CD14-positive monocyte (primary cell): ENCODE measurements at regions of chr1 and their contacts with region 1.

Region 1: DNA sequence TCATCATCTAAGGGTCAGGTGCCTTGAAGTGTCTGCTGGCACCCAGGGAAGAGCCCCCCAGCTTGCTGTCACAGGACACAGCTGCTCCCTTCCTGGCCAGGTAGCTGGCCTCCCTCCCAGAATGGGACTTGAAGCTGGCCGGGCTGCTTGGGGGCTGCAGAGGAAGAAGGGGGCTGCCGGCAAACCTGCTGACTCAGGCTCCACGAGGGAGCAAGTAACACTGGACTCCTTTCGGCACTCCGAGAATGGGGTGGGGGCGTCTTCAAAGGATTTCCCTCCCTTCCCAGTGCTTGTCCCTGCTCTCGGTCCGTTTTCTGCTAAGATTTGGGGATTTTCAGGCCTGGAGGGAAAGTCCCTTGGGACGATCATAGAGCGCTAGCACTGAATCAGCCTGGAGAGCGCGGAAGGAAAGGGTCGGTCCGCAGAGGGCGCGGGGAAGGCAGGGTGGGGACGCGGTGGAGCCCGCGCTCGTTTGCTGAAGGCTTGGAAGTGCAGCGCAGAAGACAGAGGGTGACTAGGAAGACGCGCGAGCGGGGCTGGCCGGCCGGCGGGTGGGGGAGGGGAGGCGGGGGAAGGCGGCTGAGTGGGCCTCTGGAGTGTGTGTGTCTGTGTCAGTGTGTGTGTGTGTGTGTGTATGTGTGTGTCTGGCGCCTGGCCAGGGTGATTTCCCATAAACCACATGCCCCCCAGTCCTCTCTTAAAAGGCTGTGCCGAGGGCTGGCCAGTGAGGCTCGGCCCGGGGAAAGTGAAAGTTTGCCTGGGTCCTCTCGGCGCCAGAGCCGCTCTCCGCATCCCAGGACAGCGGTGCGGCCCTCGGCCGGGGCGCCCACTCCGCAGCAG is at the start of gene CSF1:
- DNase-seq: peak; percentile 47 to 83 (median 70)
- H3K4me3 ChIP-seq: peak within 1 kb of the TSS; percentile 48 to 75 (median 56)
- H3K4me3 Mint-ChIP-seq: peak within 1 kb of the TSS; percentile 89 to 92
- H3K27ac ChIP-seq: peak within 1 kb of the TSS in 1 of 2 donors; percentile 38
- H3K27ac Mint-ChIP-seq: peak within 1 kb of the TSS; percentile 36 to 87 (median 79)
- H3K4me1 ChIP-seq: peaks cover 17 to 24% of the 10 kb centered on the region in 2 donors
- H3K4me1 Mint-ChIP-seq: peaks cover 33% of the 10 kb centered on the region
- H3K27me3 ChIP-seq: peaks cover 29 to 64% of the 10 kb centered on the region in 2 donors
- H3K27me3 Mint-ChIP-seq: peaks cover 55 to 70% (median 60%) of the 10 kb centered on the region in 3 donors
- CTCF ChIP-seq: no peak
- polyA plus RNA-seq, gene CSF1: 0.11 to 0.69 (median 0.38) TPM

Region 2: GRCh38 chr1:109864047-109864822 is 46.1 kb before region 1 on chr1:
- intact Hi-C with region 1: loop called in 1 of 2 experiments (anchors 10 kb)
- DNase-seq: peak; percentile 29 to 42 (median 38)
- H3K4me3 ChIP-seq: peak overlapping the region in 1 of 3 experiments; percentile 38
- H3K4me3 Mint-ChIP-seq: peak overlapping the region; percentile 18 to 68
- H3K27ac ChIP-seq: peak overlapping the region in 1 of 2 donors; percentile 18
- H3K27ac Mint-ChIP-seq: peak overlapping the region; percentile 1 to 84 (median 55)
- H3K4me1 ChIP-seq: peaks cover 8 to 18% of the 10 kb centered on the region in 2 donors
- H3K4me1 Mint-ChIP-seq: peaks cover 18% of the 10 kb centered on the region
- H3K27me3 ChIP-seq: no peaks in the 10 kb centered on the region
- H3K27me3 Mint-ChIP-seq: peaks cover 2 to 8% (median 3%) of the 10 kb centered on the region in 3 donors
- CTCF ChIP-seq: no peak

Region 3: GRCh38 chr1:109895720-109896504 is 14.4 kb before region 1 on chr1:
- intact Hi-C with region 1: loop called (anchors 2 kb)
- DNase-seq: peak; percentile 88 to 95 (median 94)
- H3K4me3 ChIP-seq: peak overlapping the region in 1 of 3 experiments; percentile 51
- H3K4me3 Mint-ChIP-seq: peak overlapping the region in 1 of 2 donors; percentile 54
- H3K27ac ChIP-seq: peak overlapping the region in 1 of 2 donors; percentile 79
- H3K27ac Mint-ChIP-seq: peak overlapping the region in 2 of 7 donors; percentile 47 to 88
- H3K4me1 ChIP-seq: peaks cover 64 to 74% of the 10 kb centered on the region in 2 donors
- H3K4me1 Mint-ChIP-seq: peaks cover 19% of the 10 kb centered on the region
- H3K27me3 ChIP-seq: peaks cover 0 to 2% of the 10 kb centered on the region in 2 donors
- H3K27me3 Mint-ChIP-seq: peaks cover 10 to 18% (median 14%) of the 10 kb centered on the region in 3 donors
- CTCF ChIP-seq: no peak